ENCODE measurements at regions of chr2 and their contacts with region 1.

Region 1: DNA sequence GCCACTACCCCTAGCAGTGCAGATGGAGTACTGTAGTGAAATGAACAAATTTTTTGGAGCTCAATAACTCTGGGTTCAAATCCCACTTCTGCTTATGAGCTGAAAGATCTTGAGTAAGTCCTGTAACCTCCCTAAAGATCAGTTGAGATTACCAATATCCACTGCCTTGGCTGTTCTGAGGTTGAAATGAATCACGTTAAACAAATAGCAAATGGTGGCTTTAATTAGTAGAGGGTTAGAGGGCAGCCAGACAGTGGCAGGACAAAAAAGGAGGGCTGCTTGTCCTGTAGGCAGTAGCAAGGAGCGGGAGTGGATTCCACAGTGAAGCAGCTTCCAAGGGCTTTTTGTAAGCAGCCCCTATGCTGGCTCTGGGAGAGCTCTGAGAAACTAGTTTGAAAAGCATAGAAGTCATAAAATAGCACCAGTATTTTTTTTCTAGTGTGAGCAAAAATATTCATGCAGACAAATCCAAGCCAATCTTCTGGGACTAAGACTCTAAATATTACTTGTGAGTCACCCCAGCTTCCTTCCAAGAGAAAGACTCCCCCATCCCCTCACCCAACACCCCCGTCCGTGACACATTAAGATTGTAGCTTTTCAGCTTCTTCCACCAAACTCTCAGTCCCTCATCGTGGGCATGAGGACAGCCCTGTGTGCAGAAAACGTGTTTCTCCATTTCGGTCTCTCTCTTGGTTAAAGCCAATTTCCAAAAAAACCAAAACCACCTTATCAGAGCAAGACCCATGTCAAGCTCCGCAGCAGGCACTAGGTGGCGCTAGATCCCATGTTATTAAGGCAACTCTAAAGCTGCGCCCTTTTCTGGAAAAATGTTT is 123.5 kb upstream of the LGALSL start:
- DNase-seq: peak; percentile 70 to 79 (median 74)
- H3K4me3 ChIP-seq: no peak overlapping the region
- H3K4me3 Mint-ChIP-seq: peak overlapping the region in 7 of 8 donors; percentile 25 to 83 (median 75)
- H3K27ac ChIP-seq: no peak overlapping the region
- H3K27ac Mint-ChIP-seq: peak overlapping the region in 6 of 7 donors; percentile 33 to 92 (median 86)
- H3K4me1 ChIP-seq: peaks cover 38% of the 10 kb centered on the region
- H3K4me1 Mint-ChIP-seq: peaks cover 28 to 46% (median 34%) of the 10 kb centered on the region in 4 donors
- H3K27me3 ChIP-seq: no peaks in the 10 kb centered on the region
- H3K27me3 Mint-ChIP-seq: no peaks in the 10 kb centered on the region

Region 2: DNA sequence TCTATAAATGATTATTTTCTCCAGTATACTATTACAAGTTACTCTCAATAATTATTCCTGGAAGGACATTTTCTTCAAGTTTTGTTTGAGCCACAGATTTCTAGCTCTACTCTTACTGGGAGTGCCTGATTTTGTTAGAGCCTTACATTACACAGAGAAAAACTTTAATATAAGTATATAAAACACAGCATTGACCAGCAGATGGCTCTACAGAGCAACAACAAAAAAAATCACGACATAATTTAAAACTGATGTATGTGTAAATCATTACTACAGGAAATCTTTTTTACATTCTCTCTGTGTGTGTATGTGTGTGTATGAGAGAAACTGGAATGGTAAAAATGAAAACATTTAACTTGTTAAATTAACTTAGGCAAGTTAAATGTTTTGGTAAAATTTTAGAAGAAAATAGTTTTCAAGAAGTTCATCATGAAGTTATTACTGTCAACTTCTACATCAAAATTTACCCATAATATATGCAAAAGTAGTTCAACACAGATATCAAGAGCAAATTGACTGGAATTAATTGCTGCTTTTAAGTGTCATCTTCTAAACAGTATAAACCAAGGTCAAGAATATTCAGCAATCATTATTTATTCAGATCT is 638.4 kb before region 1 on chr2:
- CTCF ChIA-PET with region 1: interaction called, 5 read pairs
- POLR2A ChIA-PET with region 1: no interaction called
- intact Hi-C with region 1: loop called (anchors 1 kb)
- DNase-seq: peak in 4 of 5 donors; percentile 38 to 54 (median 46)
- H3K4me3 ChIP-seq: no peak overlapping the region
- H3K4me3 Mint-ChIP-seq: no peak overlapping the region
- H3K27ac ChIP-seq: no peak overlapping the region
- H3K27ac Mint-ChIP-seq: no peak overlapping the region
- H3K4me1 ChIP-seq: no peaks in the 10 kb centered on the region
- H3K4me1 Mint-ChIP-seq: peaks cover 0 to 1% (median 0%) of the 10 kb centered on the region in 4 donors
- H3K27me3 ChIP-seq: no peaks in the 10 kb centered on the region
- H3K27me3 Mint-ChIP-seq: no peaks in the 10 kb centered on the region

Region 3: DNA sequence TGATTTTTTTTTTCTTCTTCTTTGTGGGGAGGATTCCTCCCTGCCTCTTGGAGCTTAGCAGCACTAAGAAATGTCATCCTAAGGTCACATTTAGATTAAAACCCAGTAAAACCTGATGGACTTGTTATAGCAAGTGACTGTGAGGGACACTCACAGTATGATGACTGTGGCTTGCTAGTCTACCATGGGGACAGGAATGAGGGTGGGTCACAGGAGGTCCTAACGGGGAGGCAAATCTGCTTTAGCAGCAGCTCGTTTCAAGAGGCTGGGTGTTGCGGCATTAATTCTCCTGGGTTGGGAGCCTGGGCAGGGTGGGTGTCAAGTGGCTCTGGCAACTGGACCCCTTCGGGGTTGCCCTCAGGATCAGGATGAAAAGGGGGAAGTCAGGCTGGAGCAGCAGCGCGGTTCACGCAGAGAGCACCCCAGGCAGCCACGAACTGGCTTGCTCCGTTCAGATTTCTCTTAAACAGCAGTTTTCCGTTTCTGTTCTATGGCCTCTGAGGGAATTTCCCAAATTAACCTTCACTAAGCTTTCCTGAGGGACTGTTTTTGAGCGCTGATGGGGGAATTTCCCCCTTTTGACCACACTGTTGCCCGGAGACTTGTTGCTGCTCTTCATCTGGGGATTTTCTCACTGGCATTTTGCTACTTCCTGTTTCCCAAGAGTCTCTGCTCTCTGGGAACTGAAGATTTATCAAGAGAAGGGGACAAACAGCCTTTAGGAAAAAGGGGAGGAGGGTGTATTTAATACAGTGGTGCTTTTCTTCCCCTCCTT is 126.5 kb before region 1 on chr2:
- CTCF ChIA-PET with region 1: interaction called, 21 read pairs
- POLR2A ChIA-PET with region 1: interaction called, 11 read pairs
- intact Hi-C with region 1: loop called (anchors 1 kb)
- DNase-seq: peak in 4 of 5 donors; percentile 43 to 82 (median 54)
- H3K4me3 ChIP-seq: peak overlapping the region; percentile 5 to 35
- H3K4me3 Mint-ChIP-seq: peak overlapping the region; percentile 62 to 93 (median 80)
- H3K27ac ChIP-seq: peak overlapping the region; percentile 87
- H3K27ac Mint-ChIP-seq: peak overlapping the region; percentile 91 to 99 (median 96)
- H3K4me1 ChIP-seq: peaks cover 81% of the 10 kb centered on the region
- H3K4me1 Mint-ChIP-seq: peaks cover 54 to 85% (median 75%) of the 10 kb centered on the region in 4 donors
- H3K27me3 ChIP-seq: no peaks in the 10 kb centered on the region
- H3K27me3 Mint-ChIP-seq: no peaks in the 10 kb centered on the region

Region 4: DNA sequence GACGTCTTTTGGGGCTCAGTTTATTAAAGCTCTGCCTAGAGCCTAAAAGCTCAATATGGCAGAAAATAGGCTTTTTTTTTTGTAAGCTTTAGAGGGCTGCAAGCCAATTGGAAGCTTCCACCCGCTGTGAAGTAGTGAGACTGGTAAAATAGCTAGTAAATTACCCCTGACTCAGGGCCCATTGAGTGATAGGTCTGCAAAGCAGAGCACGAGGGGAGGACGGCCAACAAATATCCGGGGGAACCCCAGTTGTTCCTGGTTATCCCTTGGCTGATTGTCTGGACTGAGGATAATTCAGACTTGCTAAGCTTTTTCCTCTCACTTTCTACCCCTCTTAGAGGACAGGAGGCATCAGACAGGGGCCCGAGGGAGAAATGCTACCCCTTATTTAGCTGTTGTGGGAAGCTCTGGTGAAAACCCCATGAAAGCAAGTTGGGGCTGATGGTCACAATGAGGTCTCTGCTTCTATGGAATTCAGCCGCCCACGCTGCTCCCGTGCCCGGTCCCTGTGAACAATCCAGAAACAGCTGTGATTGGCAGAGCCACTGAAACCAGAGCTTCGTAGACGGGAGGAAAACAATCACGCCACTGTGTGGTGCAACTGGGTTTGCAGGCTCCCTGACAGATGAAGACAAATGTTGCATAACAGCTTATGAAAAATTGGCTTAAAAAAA is 18.4 kb before region 1 on chr2:
- CTCF ChIA-PET with region 1: interaction called, 30 read pairs
- POLR2A ChIA-PET with region 1: interaction called, 5 read pairs
- intact Hi-C with region 1: no loop called
- DNase-seq: no peak
- H3K4me3 ChIP-seq: no peak overlapping the region
- H3K4me3 Mint-ChIP-seq: no peak overlapping the region
- H3K27ac ChIP-seq: no peak overlapping the region
- H3K27ac Mint-ChIP-seq: no peak overlapping the region
- H3K4me1 ChIP-seq: no peaks in the 10 kb centered on the region
- H3K4me1 Mint-ChIP-seq: no peaks in the 10 kb centered on the region
- H3K27me3 ChIP-seq: no peaks in the 10 kb centered on the region
- H3K27me3 Mint-ChIP-seq: peaks cover 0 to 1% of the 10 kb centered on the region in 2 donors

Region 5: GRCh38 chr2:64498438-64498837 is 167.9 kb after region 1 on chr2:
- CTCF ChIA-PET with region 1: interaction called, 10 read pairs
- POLR2A ChIA-PET with region 1: no interaction called
- intact Hi-C with region 1: no loop called
- DNase-seq: no peak
- H3K4me3 ChIP-seq: no peak overlapping the region
- H3K4me3 Mint-ChIP-seq: no peak overlapping the region
- H3K27ac ChIP-seq: no peak overlapping the region
- H3K27ac Mint-ChIP-seq: no peak overlapping the region
- H3K4me1 ChIP-seq: no peaks in the 10 kb centered on the region
- H3K4me1 Mint-ChIP-seq: no peaks in the 10 kb centered on the region
- H3K27me3 ChIP-seq: no peaks in the 10 kb centered on the region
- H3K27me3 Mint-ChIP-seq: peaks cover 3 to 5% of the 10 kb centered on the region in 2 donors

Region 6: GRCh38 chr2:64865073-64865830 is 534.8 kb after region 1 on chr2:
- CTCF ChIA-PET with region 1: interaction called, 26 read pairs
- POLR2A ChIA-PET with region 1: no interaction called
- intact Hi-C with region 1: loop called (anchors 1 kb)
- DNase-seq: peak in 4 of 5 donors; percentile 69 to 75 (median 70)
- H3K4me3 ChIP-seq: peak overlapping the region in 1 of 2 donors; percentile 60
- H3K4me3 Mint-ChIP-seq: peak overlapping the region; percentile 79 to 88 (median 82)
- H3K27ac ChIP-seq: no peak overlapping the region
- H3K27ac Mint-ChIP-seq: peak overlapping the region in 1 of 7 donors; percentile 64
- H3K4me1 ChIP-seq: peaks cover 10% of the 10 kb centered on the region
- H3K4me1 Mint-ChIP-seq: peaks cover 0 to 3% (median under 1%) of the 10 kb centered on the region in 4 donors
- H3K27me3 ChIP-seq: no peaks in the 10 kb centered on the region
- H3K27me3 Mint-ChIP-seq: peaks cover 2 to 3% of the 10 kb centered on the region in 2 donors

Region 7: GRCh38 chr2:65464604-65465003 is 1134.1 kb after region 1 on chr2:
- CTCF ChIA-PET with region 1: no interaction called
- POLR2A ChIA-PET with region 1: no interaction called
- intact Hi-C with region 1: no loop called
- DNase-seq: no peak
- H3K4me3 ChIP-seq: no peak overlapping the region
- H3K4me3 Mint-ChIP-seq: no peak overlapping the region
- H3K27ac ChIP-seq: no peak overlapping the region
- H3K27ac Mint-ChIP-seq: no peak overlapping the region
- H3K4me1 ChIP-seq: no peaks in the 10 kb centered on the region
- H3K4me1 Mint-ChIP-seq: peaks cover 0 to 2% (median under 1%) of the 10 kb centered on the region in 4 donors
- H3K27me3 ChIP-seq: no peaks in the 10 kb centered on the region
- H3K27me3 Mint-ChIP-seq: peaks cover 11 to 21% of the 10 kb centered on the region in 2 donors